CD8-positive, alpha-beta T cell (primary cell): ENCODE measurements at regions of chr19 and their contacts with region 1.

Region 1: DNA sequence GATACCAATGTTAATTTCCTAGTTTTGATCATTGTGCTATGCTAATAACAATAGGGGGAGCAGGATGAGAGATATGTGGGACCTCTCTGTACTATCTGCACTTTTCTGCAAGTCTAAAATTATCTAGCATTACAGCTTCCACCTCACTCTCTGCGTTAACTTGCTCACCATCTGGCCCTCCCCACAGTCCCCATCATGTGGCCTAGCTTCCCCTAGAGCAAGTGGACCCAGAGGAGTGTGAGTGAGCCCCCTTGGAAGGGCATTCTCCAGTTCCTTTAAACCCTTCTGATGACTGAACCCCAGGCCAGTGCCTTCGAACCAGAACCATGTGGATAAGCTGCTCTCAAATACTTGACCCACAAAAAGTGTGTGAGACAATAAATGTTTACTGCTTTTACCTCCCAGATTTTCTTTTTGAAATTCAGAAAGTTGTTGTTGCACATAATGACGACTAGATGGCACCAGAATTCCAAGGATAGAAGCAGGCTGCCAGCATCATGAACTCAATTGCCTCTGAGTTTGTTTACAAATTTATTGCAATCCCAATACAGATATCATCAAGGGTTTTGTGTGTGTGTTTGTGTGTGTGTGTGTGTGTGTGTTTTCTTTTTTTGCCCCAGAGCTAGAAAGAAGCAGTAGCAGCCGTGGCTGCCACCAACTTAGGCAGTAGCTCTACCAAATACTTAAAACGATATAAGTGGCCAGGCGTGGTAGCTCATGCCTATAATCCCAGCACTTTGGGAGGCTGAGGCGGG is 49.0 kb upstream of the ZNF780A start:
- DNase-seq: peak in 4 of 9 experiments; percentile 14 to 78 (median 46)
- ATAC-seq: peak; percentile 30
- H3K4me3 ChIP-seq: no peak overlapping the region
- H3K4me3 Mint-ChIP-seq: no peak overlapping the region
- H3K27ac ChIP-seq: no peak overlapping the region
- H3K27ac Mint-ChIP-seq: no peak overlapping the region
- H3K4me1 ChIP-seq: peaks cover 26% of the 10 kb centered on the region
- H3K4me1 Mint-ChIP-seq: peaks cover 26% of the 10 kb centered on the region
- H3K27me3 ChIP-seq: no peaks in the 10 kb centered on the region
- H3K27me3 Mint-ChIP-seq: peaks cover 9% of the 10 kb centered on the region
- CTCF ChIP-seq: peak; percentile 71

Region 2: GRCh38 chr19:40165362-40165937 is 25.7 kb after region 1 on chr19:
- CTCF ChIA-PET with region 1: interaction called, 176 read pairs
- POLR2A ChIA-PET with region 1: interaction called, 3 read pairs
- intact Hi-C with region 1: loop called (anchors 1 kb)
- DNase-seq: peak; percentile 41 to 81 (median 69)
- ATAC-seq: peak; percentile 86
- H3K4me3 ChIP-seq: no peak overlapping the region
- H3K4me3 Mint-ChIP-seq: no peak overlapping the region
- H3K27ac ChIP-seq: no peak overlapping the region
- H3K27ac Mint-ChIP-seq: no peak overlapping the region
- H3K4me1 ChIP-seq: peaks cover 21% of the 10 kb centered on the region
- H3K4me1 Mint-ChIP-seq: peaks cover 20% of the 10 kb centered on the region
- H3K27me3 ChIP-seq: no peaks in the 10 kb centered on the region
- H3K27me3 Mint-ChIP-seq: no peaks in the 10 kb centered on the region
- CTCF ChIP-seq: peak; percentile 74

Region 3: DNA sequence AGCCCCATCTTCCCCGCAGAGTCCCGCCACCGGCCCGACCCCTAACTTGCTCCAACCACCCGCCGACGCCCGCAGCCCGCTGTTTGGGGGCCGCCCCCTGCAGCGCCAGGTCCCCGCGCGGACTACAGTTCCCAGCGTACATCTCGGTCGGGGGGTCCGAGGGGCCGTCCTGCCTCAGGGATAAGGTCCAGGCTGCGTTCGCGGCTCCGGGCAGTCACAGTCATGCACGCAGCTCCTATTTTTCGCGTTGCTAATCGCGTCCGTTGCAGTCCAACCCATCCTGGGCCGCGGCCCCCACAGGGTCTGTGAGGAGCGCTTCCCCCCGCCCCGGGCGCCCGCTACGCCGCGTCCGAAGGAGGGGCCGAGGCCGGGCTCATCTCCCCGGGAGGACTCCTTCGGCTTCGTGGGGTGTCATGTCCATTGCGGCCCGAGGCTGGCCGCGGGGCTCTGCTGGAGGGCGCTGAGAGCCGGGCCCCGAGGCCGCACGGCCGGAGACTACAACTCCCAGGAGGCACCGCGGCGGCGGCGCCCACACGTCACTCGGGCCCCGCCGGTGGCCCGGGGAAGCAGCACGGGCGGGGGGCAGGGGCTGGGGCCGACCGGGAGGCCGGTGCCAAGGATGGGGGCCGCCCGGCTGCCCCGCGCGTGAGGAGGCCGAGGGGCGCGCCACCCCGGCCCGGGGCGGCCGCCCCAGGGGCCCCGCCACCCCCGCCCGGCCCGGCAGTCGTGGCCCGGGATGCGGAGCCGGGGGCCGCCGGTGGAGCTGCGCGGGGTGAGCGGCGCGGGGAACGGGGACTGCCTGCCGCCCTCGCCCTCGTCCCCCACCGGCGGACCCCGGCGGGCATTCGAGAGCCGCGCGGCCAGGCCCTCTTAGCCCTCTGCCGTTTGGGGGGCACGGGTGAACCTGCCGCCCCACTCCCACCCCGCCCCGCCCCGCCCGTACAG is 51.5 kb after region 1 on chr19 and contains the start of gene MAP3K10:
- CTCF ChIA-PET with region 1: interaction called, 15 read pairs
- POLR2A ChIA-PET with region 1: interaction called, 6 read pairs
- intact Hi-C with region 1: loop called (anchors 1 to 2 kb)
- DNase-seq: peak; percentile 41 to 86 (median 70)
- ATAC-seq: peak; percentile 79
- H3K4me3 ChIP-seq: peak within 1 kb of the TSS; percentile 82 to 100
- H3K4me3 Mint-ChIP-seq: peak within 1 kb of the TSS; percentile 91
- H3K27ac ChIP-seq: peak within 1 kb of the TSS; percentile 81 to 90
- H3K27ac Mint-ChIP-seq: peak within 1 kb of the TSS; percentile 91
- H3K4me1 ChIP-seq: peaks cover 16% of the 10 kb centered on the region
- H3K4me1 Mint-ChIP-seq: peaks cover 34% of the 10 kb centered on the region
- H3K27me3 ChIP-seq: no peaks in the 10 kb centered on the region
- H3K27me3 Mint-ChIP-seq: no peaks in the 10 kb centered on the region
- CTCF ChIP-seq: no peak
- total RNA-seq, gene MAP3K10: 26.4 to 27.7 TPM

Region 4: GRCh38 chr19:40221858-40222837 is 82.4 kb after region 1 on chr19:
- CTCF ChIA-PET with region 1: interaction called, 48 read pairs
- POLR2A ChIA-PET with region 1: interaction called, 3 read pairs
- intact Hi-C with region 1: loop called (anchors 1 kb)
- DNase-seq: peak; percentile 47 to 91 (median 76)
- ATAC-seq: peak; percentile 77
- H3K4me3 ChIP-seq: no peak overlapping the region
- H3K4me3 Mint-ChIP-seq: no peak overlapping the region
- H3K27ac ChIP-seq: no peak overlapping the region
- H3K27ac Mint-ChIP-seq: no peak overlapping the region
- H3K4me1 ChIP-seq: peaks cover 21% of the 10 kb centered on the region
- H3K4me1 Mint-ChIP-seq: peaks cover 16% of the 10 kb centered on the region
- H3K27me3 ChIP-seq: peaks cover 39 to 42% of the 10 kb centered on the region in 2 experiments
- H3K27me3 Mint-ChIP-seq: peaks cover 49% of the 10 kb centered on the region
- CTCF ChIP-seq: peak; percentile 88

Region 5: DNA sequence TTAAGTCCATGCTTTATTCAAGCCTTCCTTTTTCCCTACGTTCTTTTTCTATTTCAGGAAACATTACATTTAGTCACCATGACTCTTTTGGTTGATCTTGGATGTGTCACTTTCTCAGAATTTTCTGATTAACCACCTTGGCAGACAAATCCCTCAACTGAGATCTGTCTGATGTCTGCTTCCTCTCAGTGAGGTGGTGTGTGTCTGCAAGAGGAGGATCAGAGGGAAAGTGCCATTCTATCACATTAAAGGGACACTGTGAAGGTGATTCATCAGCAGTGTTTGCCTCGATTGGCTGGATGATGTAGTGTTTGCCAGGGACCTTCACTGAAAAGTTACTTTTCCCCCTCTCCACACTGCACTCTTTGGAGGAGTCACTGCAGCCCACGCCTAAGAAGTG is 89.8 kb after region 1 on chr19:
- CTCF ChIA-PET with region 1: interaction called, 31 read pairs
- POLR2A ChIA-PET with region 1: no interaction called
- intact Hi-C with region 1: no loop called
- DNase-seq: peak in 1 of 9 experiments; percentile 22
- ATAC-seq: peak; percentile 51
- H3K4me3 ChIP-seq: no peak overlapping the region
- H3K4me3 Mint-ChIP-seq: no peak overlapping the region
- H3K27ac ChIP-seq: no peak overlapping the region
- H3K27ac Mint-ChIP-seq: no peak overlapping the region
- H3K4me1 ChIP-seq: peaks cover 13% of the 10 kb centered on the region
- H3K4me1 Mint-ChIP-seq: peaks cover 22% of the 10 kb centered on the region
- H3K27me3 ChIP-seq: peaks cover 18 to 19% of the 10 kb centered on the region in 2 experiments
- H3K27me3 Mint-ChIP-seq: peaks cover 13% of the 10 kb centered on the region
- CTCF ChIP-seq: no peak

Region 6: GRCh38 chr19:40633207-40633606 is 493.5 kb after region 1 on chr19:
- CTCF ChIA-PET with region 1: interaction called, 12 read pairs
- POLR2A ChIA-PET with region 1: no interaction called
- intact Hi-C with region 1: loop called in 1 of 2 experiments (anchors 1 kb)
- DNase-seq: no peak
- ATAC-seq: no peak
- H3K4me3 ChIP-seq: no peak overlapping the region
- H3K4me3 Mint-ChIP-seq: no peak overlapping the region
- H3K27ac ChIP-seq: no peak overlapping the region
- H3K27ac Mint-ChIP-seq: no peak overlapping the region
- H3K4me1 ChIP-seq: peaks cover 4% of the 10 kb centered on the region
- H3K4me1 Mint-ChIP-seq: peaks cover 12% of the 10 kb centered on the region
- H3K27me3 ChIP-seq: peaks cover 0 to 3% of the 10 kb centered on the region in 2 experiments
- H3K27me3 Mint-ChIP-seq: peaks cover 5% of the 10 kb centered on the region
- CTCF ChIP-seq: no peak